ENCODE measurements at regions of chr17 and their contacts with region 1.

Region 1: GRCh38 chr17:77280980-77281903 is 140.5 kb downstream of the SEC14L1 start:
- DNase-seq: peak; percentile 66
- H3K4me3 ChIP-seq: peak overlapping the region; percentile 84 to 95 (median 87)
- H3K27ac ChIP-seq: peak overlapping the region; percentile 96
- H3K4me1 ChIP-seq: peaks cover 42% of the 10 kb centered on the region
- H3K27me3 ChIP-seq: no peaks in the 10 kb centered on the region
- CTCF ChIP-seq: peak; percentile 19 to 34

Region 2: DNA sequence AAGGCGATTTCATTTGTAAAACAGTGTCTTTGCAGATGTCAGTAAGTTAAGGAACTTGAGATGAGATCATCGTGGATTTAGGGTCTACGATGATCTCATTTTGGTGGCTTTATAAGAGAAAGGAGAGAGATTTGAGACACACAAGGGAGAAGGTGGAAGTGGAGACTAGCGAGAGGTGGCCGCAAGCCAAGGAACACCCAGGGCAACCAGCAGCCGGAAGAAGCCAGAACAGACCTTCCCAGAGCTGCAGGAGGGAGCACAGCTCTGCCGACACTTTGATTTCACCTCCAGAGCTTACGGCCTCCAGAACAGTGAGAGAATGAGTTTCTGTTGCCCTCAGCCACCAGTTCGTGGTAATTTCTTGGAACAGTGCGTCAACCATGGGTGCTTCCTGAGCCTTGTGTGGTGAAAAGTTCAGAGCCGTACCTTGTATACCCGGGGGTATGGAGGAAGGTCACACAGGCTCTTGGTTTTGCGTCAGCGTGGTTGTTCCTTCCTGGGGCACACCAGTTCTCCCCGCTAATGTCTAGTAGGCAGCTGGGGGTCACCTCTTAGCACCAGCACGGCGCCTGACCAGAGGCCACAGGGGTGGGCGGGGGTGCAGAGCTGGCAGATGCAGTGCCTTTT is 153.4 kb before region 1 on chr17:
- CTCF ChIA-PET with region 1: no interaction called
- dilution Hi-C with region 1: no loop called
- in situ Hi-C with region 1: no loop called
- intact Hi-C with region 1: loop called (anchors 5 kb)
- DNase-seq: peak; percentile 81
- H3K4me3 ChIP-seq: no peak overlapping the region
- H3K27ac ChIP-seq: peak overlapping the region; percentile 18
- H3K4me1 ChIP-seq: peaks cover 68% of the 10 kb centered on the region
- H3K27me3 ChIP-seq: no peaks in the 10 kb centered on the region
- CTCF ChIP-seq: no peak

Region 3: DNA sequence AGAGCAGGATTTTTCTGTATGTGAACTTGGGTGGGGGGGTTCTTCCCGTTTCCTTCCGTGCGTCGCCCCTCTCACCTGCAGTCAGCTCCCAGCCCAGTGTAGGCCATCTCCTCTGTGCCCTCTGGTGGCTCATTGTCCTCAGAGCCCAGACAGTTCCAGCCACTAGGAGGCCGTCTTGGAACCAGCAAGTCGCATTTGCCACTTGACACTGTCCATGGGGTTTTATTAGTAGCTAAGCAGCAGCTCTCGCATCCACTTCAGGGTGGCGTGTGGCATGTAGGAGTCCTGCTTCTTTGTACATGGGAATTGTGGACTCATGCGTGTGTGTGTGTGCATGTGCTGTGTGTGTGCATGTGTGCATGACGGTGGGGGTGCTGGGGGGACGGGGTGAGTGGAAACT is 66.5 kb before region 1 on chr17:
- CTCF ChIA-PET with region 1: no interaction called
- dilution Hi-C with region 1: no loop called
- in situ Hi-C with region 1: no loop called
- intact Hi-C with region 1: no loop called
- DNase-seq: peak; percentile 18
- H3K4me3 ChIP-seq: no peak overlapping the region
- H3K27ac ChIP-seq: no peak overlapping the region
- H3K4me1 ChIP-seq: no peaks in the 10 kb centered on the region
- H3K27me3 ChIP-seq: no peaks in the 10 kb centered on the region
- CTCF ChIP-seq: peak; percentile 36 to 60

Region 4: DNA sequence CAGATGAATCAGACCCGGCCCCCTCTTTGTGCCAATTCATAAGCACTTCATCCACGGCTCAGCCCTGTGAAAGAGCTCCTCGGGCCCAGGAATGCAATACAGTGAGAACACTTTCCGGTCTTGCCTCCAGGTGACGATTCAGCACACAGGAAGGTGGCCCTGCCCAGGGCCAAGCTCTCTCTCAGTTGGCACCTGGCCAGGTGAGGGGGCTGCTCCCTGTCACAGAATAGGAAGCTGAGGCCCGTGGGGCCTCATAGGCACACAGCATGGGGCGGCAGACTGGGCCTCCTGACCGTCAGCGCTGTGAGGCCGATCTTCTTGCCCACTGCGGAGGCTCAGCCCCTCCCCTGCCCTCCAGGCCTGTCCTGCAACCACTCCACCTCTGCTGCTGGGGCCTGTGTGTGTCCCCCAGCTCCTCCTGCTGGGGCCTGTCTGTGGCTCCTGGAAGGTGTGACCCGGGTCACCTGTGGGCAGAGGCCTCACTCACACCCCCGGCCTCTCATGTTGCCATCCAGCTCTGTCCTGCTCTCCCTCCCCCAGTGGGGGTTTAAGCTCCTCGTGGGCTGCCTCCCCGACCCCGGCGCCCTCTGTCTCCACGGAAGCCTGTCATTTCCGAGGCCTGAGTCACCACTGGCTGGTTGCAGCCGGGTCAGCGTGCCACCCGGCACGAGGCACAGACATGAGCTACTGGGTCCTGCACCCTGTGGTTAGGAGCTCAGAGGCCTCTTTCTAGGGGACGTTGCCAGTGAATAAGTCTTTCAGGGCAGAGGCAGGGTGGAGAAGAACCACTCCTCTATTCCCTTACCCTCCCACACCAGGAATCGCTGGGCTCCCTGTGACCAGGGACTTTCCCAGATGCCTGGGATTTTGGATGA is 26.1 kb before region 1 on chr17:
- CTCF ChIA-PET with region 1: interaction called, 3 read pairs
- dilution Hi-C with region 1: no loop called
- in situ Hi-C with region 1: loop called in 1 of 2 experiments (anchors 5 kb)
- intact Hi-C with region 1: loop called (anchors 1 kb)
- DNase-seq: peak; percentile 98
- H3K4me3 ChIP-seq: peak overlapping the region in 2 of 3 experiments; percentile 7 to 25
- H3K27ac ChIP-seq: peak overlapping the region; percentile 92
- H3K4me1 ChIP-seq: peaks cover 36% of the 10 kb centered on the region
- H3K27me3 ChIP-seq: no peaks in the 10 kb centered on the region
- CTCF ChIP-seq: no peak

Region 5: DNA sequence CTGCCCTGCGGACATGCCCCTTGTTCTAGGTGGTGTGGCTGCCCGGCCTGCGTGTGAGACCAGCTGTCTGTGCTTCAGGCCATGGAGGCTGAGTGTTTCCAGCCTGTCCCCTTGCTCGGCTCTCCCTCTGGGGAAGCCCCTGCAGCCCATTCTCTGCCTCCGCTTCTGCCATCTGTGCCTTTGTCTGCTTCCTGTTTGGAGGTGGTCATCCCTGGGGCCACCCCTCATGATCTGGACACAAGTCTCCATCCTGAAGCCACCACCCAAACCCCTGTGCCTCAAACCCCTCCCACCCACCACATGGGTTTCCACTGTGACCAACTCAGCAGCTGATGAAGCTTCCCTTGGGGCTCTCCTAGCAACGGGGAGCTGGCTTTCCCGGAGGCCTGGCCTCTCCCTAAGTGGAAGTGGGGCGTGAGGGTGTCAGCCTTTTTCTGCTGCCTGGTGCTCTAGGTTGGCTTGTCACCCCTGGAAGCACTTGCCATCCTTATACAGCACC is 44.4 kb after region 1 on chr17:
- CTCF ChIA-PET with region 1: no interaction called
- dilution Hi-C with region 1: loop called (anchors 5 kb)
- in situ Hi-C with region 1: loop called in 1 of 2 experiments (anchors 5 kb)
- intact Hi-C with region 1: loop called (anchors 1 kb)
- DNase-seq: no peak
- H3K4me3 ChIP-seq: no peak overlapping the region
- H3K27ac ChIP-seq: no peak overlapping the region
- H3K4me1 ChIP-seq: peaks cover 64% of the 10 kb centered on the region
- H3K27me3 ChIP-seq: no peaks in the 10 kb centered on the region
- CTCF ChIP-seq: no peak

Region 6: DNA sequence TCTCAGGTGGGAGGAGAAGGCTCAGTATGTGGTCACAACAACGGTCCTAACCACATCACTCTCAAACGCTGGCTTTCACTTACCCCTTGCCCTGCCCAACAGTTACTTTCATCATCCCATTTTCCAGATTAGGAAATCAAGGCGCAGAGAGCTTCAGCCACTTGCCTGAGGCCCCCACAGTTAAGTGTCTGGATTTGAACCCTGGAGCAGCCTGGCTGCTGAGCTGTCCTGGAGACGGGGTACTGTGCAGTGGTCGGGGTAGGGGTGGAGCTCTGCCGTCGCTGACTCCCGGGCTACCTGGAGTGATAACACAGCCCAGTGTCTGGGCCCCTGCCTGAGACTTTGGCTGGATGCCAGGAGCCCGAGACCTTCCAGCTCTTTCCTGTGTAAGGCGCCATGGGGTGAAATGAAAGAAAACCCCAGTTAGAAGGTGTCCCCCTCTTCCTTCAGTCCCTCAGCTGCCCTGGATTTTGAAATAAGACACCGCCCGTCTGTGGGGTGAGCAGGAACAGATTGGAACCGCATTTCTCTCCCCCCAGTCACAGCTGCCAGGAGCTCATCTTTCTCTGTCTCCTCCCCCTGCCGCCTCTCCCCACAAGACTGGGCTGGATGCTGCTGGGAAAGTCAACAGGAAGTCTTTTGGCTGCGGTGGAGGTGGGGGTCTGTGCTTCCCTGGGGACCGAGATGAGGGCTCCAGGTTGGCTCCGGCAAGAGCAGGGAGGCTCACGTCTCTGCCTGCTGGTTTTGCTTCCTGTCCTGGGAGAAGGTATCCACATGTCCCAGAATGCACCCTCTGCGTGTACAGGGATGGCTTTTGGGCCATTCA is 139.8 kb after region 1 on chr17:
- CTCF ChIA-PET with region 1: no interaction called
- dilution Hi-C with region 1: loop called (anchors 5 kb)
- in situ Hi-C with region 1: no loop called
- intact Hi-C with region 1: loop called (anchors 2 kb)
- DNase-seq: peak; percentile 74
- H3K4me3 ChIP-seq: no peak overlapping the region
- H3K27ac ChIP-seq: peak overlapping the region; percentile 76
- H3K4me1 ChIP-seq: peaks cover 78% of the 10 kb centered on the region
- H3K27me3 ChIP-seq: no peaks in the 10 kb centered on the region
- CTCF ChIP-seq: no peak

Region 7: GRCh38 chr17:77471984-77472461 is 190.8 kb after region 1 on chr17:
- CTCF ChIA-PET with region 1: no interaction called
- dilution Hi-C with region 1: no loop called
- in situ Hi-C with region 1: no loop called
- intact Hi-C with region 1: loop called (anchors 1 kb)
- DNase-seq: peak; percentile 76
- H3K4me3 ChIP-seq: no peak overlapping the region
- H3K27ac ChIP-seq: peak overlapping the region; percentile 82
- H3K4me1 ChIP-seq: peaks cover 72% of the 10 kb centered on the region
- H3K27me3 ChIP-seq: no peaks in the 10 kb centered on the region
- CTCF ChIP-seq: no peak

Measured in mammary epithelial cell (primary cell).